ENCODE measurements at regions of chr3 and their contacts with region 1.

Region 1: DNA sequence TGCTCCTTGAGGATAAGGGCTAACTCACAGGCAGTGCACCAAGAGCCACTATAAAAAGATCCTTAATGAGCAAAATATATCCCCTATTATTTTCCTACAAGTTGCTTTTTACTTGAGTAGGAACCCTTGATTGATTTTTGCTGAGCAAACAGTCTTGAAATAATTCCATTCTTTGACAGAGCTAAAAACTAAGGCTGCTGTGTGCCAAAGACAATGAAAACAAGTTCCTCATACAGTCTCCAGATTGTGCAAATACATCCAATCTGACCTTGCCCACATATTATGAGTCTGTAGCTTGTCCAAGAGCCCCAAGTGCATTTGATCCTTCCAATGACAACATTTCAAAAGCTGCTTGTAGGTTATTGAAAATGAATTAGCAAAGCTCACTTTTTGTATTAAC is 15.0 kb downstream of the PRKAR2A start:
- DNase-seq: no peak
- ATAC-seq: peak; percentile 54 to 55
- H3K4me3 ChIP-seq: no peak overlapping the region
- H3K27ac ChIP-seq: no peak overlapping the region
- H3K4me1 ChIP-seq: peaks cover 4% of the 10 kb centered on the region
- H3K27me3 ChIP-seq: no peaks in the 10 kb centered on the region

Region 2: GRCh38 chr3:48789665-48790064 is 43.0 kb before region 1 on chr3:
- intact Hi-C with region 1: loop called in 1 of 4 experiments (anchors 5 kb)
- DNase-seq: no peak
- ATAC-seq: no peak
- H3K4me3 ChIP-seq: no peak overlapping the region
- H3K27ac ChIP-seq: no peak overlapping the region
- H3K4me1 ChIP-seq: no peaks in the 10 kb centered on the region
- H3K27me3 ChIP-seq: no peaks in the 10 kb centered on the region

Region 3: DNA sequence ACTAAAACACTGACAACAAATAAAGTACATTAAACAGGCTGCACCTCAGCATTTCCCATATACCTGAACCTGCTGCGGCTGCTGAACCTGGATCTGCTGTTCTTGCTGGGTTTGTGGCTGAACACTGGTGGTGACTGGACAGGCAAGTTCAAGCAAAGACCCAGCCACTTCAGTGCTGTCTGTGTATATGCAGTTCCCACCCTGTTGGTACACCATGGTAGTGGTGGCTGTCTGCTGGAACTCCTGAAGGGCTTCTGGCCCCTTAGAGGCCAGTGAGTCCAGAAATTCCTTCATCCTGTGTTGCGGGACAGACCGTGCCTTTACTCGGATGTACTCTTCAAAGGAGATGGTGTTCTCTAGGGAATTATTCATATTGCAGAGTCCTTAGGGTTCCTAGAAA is 244.0 kb after region 1 on chr3:
- intact Hi-C with region 1: no loop called
- DNase-seq: no peak
- ATAC-seq: no peak
- H3K4me3 ChIP-seq: no peak overlapping the region
- H3K27ac ChIP-seq: no peak overlapping the region
- H3K4me1 ChIP-seq: peaks cover 3% of the 10 kb centered on the region
- H3K27me3 ChIP-seq: no peaks in the 10 kb centered on the region

Region 4: GRCh38 chr3:49539659-49540560 is 707.2 kb after region 1 on chr3:
- intact Hi-C with region 1: no loop called
- DNase-seq: peak; percentile 95 to 98 (median 97)
- ATAC-seq: peak; percentile 98 to 99
- H3K4me3 ChIP-seq: peak overlapping the region; percentile 46
- H3K27ac ChIP-seq: peak overlapping the region; percentile 89
- H3K4me1 ChIP-seq: peaks cover 6% of the 10 kb centered on the region
- H3K27me3 ChIP-seq: no peaks in the 10 kb centered on the region

Measured in right cardiac atrium (tissue), 5 donors.